ENCODE measurements at regions of chr2 and their contacts with region 1.

Region 1: DNA sequence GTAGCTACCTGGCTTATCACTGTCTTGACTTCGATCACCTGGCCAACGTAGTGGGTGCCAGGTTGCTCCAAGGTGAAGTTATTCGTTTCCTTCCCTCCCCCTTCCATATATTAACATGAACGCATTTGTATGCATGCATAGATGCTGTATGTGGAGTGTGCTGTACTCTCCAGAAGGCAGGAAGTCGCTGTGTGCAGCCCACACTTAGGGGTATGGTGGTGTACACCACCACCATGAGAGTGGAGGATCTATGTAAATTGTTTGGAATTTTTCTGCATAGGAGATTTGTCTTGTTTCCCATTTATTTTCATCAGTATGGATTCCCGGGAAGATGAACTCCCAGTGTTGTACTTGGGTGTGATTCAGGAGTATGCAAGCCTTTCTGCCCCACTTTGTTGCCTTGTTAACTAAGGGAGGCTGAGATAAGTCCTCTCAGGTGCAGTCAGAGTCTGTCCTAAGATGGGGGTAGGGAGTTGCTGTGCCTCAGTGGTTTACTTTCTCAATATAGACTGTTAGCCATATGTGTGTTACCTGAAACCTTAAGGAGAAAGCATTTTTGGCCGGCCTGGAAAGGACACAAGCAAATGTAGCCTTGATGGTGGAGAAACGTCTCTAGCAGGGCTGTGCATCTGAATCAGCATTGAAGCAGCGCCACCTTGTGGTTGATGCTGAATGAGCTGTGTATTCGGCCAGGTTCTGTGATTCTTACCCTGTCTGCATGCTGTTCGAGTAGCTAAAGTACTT is 149.8 kb downstream of the TANC1 start:
- DNase-seq: peak; percentile 87
- H3K4me3 ChIP-seq: no peak overlapping the region
- H3K27ac ChIP-seq: peak overlapping the region in 1 of 2 donors; percentile 4
- H3K4me1 ChIP-seq: peaks cover 4% of the 10 kb centered on the region
- H3K27me3 ChIP-seq: no peaks in the 10 kb centered on the region
- CTCF ChIP-seq: peak; percentile 80 to 97 (median 94)
- POLR2A ChIP-seq: no peak

Region 2: GRCh38 chr2:158900345-158900744 is 217.9 kb before region 1 on chr2:
- intact Hi-C with region 1: loop called (anchors 2 kb)
- DNase-seq: no peak
- H3K4me3 ChIP-seq: no peak overlapping the region
- H3K27ac ChIP-seq: no peak overlapping the region
- H3K4me1 ChIP-seq: no peaks in the 10 kb centered on the region
- H3K27me3 ChIP-seq: no peaks in the 10 kb centered on the region
- CTCF ChIP-seq: no peak
- POLR2A ChIP-seq: no peak

Region 3: GRCh38 chr2:159035790-159036411 is 82.4 kb before region 1 on chr2:
- intact Hi-C with region 1: loop called (anchors 10 kb)
- DNase-seq: peak; percentile 89
- H3K4me3 ChIP-seq: no peak overlapping the region
- H3K27ac ChIP-seq: no peak overlapping the region
- H3K4me1 ChIP-seq: no peaks in the 10 kb centered on the region
- H3K27me3 ChIP-seq: no peaks in the 10 kb centered on the region
- CTCF ChIP-seq: peak in 3 of 4 experiments; percentile 66 to 87 (median 73)
- POLR2A ChIP-seq: no peak

Region 4: GRCh38 chr2:159076241-159076640 is 42.0 kb before region 1 on chr2:
- intact Hi-C with region 1: no loop called
- DNase-seq: no peak
- H3K4me3 ChIP-seq: no peak overlapping the region
- H3K27ac ChIP-seq: no peak overlapping the region
- H3K4me1 ChIP-seq: no peaks in the 10 kb centered on the region
- H3K27me3 ChIP-seq: no peaks in the 10 kb centered on the region
- CTCF ChIP-seq: no peak
- POLR2A ChIP-seq: no peak

Measured in prostate gland (tissue), 2 donors.